Lower lobe of right lung (tissue), 2 donors: ENCODE measurements at regions of chrX and their contacts with region 1.

Region 1: GRCh38 chrX:77910108-77910840 is at the start of gene ATP7A:
- DNase-seq: peak; percentile 93
- ATAC-seq: peak; percentile 97 to 100
- H3K4me3 ChIP-seq: peak within 1 kb of the TSS; percentile 63
- H3K27ac ChIP-seq: peak within 1 kb of the TSS; percentile 83
- H3K4me1 ChIP-seq: peaks cover 5% of the 10 kb centered on the region
- H3K27me3 ChIP-seq: no peaks in the 10 kb centered on the region
- CTCF ChIP-seq: peak; percentile 47
- total RNA-seq, gene ATP7A: 17.8 TPM

Region 2: DNA sequence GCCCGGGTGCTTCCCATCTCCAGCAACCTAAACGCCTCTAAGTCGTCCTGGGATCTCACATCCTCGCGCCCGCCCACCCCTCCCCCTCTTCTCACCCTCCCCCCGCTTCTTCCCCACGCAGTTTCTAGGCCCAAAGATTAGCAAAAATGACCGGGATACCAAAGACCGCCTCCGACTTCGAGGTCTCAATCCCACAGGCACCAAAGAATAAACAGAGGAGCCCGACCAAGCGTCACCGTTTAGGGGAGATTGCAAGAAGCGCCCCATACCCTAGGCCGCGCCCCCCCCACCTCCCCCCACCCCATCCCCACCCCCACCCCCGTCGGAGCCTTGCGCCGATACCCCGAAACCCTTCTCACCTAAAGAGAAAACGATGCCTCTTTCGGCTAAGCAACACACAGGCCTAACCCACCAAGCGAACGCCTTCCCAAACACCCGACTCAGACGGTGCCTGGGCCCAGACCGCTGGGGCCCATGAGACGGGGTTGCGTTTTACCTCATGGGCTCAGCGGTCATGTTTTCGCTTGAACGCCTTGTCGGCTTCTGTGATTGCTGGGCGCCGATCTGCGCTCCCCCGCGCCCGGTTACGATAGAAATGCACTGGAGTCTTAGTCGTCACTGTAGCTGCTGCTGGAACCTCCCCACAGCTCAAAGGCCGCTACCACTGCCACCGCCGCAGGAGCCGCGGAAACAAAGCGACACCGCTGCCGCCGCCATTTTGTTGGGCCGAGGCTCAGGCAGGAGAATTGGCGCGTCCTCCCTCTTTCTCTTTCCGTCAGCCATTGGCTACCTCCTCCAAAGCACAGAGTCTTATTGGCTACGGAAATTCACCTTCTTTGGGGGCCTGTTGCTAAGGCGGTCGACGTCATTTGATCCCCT is 124.5 kb before region 1 on chrX and contains the start of gene ATRX:
- intact Hi-C with region 1: no loop called
- DNase-seq: peak; percentile 74
- ATAC-seq: peak; percentile 96 to 97
- H3K4me3 ChIP-seq: peak within 1 kb of the TSS; percentile 66
- H3K27ac ChIP-seq: peak within 1 kb of the TSS; percentile 90
- H3K4me1 ChIP-seq: no peaks in the 10 kb centered on the region
- H3K27me3 ChIP-seq: no peaks in the 10 kb centered on the region
- CTCF ChIP-seq: no peak
- total RNA-seq, gene ATRX: 88.8 TPM

Region 3: DNA sequence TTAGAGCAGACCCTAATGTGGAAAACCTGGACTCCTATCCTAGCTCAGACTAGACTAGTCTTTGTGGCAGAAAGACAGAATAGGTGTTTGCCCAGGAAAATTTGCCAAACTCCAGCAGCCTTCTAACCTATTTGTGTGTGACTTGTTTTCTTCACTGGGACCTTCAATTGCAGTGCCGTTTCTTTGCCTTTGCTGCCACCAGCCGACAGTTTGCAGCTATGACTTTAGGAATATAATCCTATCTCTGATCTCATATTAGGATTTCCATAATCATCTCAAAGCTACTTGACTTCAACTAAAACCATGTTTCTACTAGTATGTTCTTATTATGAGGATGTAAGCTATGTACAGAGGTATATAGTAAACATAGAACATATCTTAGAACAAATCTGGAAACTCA is 119.4 kb after region 1 on chrX:
- intact Hi-C with region 1: loop called (anchors 10 kb)
- DNase-seq: no peak
- ATAC-seq: no peak
- H3K4me3 ChIP-seq: no peak overlapping the region
- H3K27ac ChIP-seq: no peak overlapping the region
- H3K4me1 ChIP-seq: no peaks in the 10 kb centered on the region
- H3K27me3 ChIP-seq: no peaks in the 10 kb centered on the region
- CTCF ChIP-seq: peak; percentile 30

Region 4: GRCh38 chrX:78165425-78165824 is 255.2 kb after region 1 on chrX:
- intact Hi-C with region 1: no loop called
- DNase-seq: no peak
- ATAC-seq: no peak
- H3K4me3 ChIP-seq: no peak overlapping the region
- H3K27ac ChIP-seq: no peak overlapping the region
- H3K4me1 ChIP-seq: no peaks in the 10 kb centered on the region
- H3K27me3 ChIP-seq: no peaks in the 10 kb centered on the region
- CTCF ChIP-seq: no peak